ENCODE measurements at regions of chr4 and their contacts with region 1.

Region 1: GRCh38 chr4:158991534-158992155 is 111.2 kb upstream of the RAPGEF2 start:
- DNase-seq: no peak

Region 2: DNA sequence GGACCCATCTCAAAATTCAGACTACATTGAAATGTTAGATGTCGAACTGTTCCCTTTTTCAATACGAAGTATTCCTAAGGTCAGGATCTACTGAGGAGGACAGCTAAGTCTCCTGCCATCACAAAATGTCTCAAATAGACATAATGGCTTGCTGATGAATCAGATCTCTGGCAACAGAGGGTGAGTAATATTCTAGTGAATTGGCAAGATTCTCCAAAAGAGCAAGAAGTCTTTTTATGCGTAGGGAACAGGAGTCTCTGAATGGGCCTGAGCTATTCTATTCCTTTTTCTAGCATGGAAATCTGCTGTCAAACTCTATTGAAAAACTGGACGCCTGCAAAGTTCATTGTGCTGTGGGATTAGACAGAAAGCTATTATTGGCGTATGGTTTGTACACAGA is 77.4 kb before region 1 on chr4:
- intact Hi-C with region 1: loop called in 1 of 2 experiments (anchors 2 kb)
- DNase-seq: no peak

Measured in posterior vena cava (tissue), 2 donors.